ENCODE measurements at regions of chr9 and their contacts with region 1.

Region 1: GRCh38 chr9:128552153-128552743 is at the start of gene SPTAN1:
- DNase-seq: peak; percentile 99
- H3K4me3 Mint-ChIP-seq: no peak within 1 kb of the TSS
- H3K27ac Mint-ChIP-seq: peak within 1 kb of the TSS; percentile 98
- H3K4me1 Mint-ChIP-seq: peaks cover 36% of the 10 kb centered on the region
- H3K27me3 Mint-ChIP-seq: no peaks in the 10 kb centered on the region
- total RNA-seq, gene SPTAN1: 240 and 249 TPM in 2 replicates

Region 2: DNA sequence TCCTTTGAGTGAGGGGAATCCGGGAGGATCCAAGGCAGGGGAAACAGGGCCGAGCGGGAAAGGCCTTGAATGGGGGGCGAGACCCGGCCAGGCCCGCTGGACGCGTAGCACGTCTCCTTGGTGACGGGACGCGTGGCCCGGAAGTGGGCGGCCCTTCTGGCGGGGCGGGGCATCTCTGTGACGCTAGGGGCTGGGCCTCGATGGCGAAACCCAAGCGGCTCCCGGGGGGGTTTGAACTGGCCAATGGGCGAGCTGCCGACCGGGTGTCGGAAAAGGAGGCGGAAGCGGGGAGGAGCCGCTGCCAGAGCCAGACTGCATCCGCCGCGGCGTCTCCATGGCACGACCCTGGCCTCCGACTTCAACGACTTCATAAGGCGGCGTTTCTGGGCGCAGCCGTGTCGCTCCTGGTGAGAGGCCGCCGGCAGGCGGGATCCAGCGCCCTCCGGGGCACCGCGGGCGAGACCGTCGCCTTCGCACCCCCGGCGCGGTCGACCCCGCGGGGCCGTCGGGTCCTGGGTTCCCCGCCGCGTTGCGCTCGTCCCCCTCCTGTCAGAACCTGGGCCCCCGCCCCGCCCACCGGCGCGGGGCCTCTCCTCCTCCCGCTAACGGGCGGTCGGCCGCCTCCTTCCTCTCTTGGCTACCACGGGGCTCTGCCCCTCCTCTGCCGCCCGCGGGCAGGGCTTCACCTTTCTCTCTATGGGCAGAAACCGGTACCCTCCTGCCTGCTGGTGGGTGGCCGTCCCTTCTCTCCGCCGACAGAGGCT is 96.2 kb before region 1 on chr9 and contains the start of gene ODF2:
- intact Hi-C with region 1: loop called (anchors 1 kb)
- DNase-seq: peak; percentile 100
- H3K4me3 Mint-ChIP-seq: peak within 1 kb of the TSS; percentile 91
- H3K27ac Mint-ChIP-seq: peak within 1 kb of the TSS; percentile 94
- H3K4me1 Mint-ChIP-seq: peaks cover 20% of the 10 kb centered on the region
- H3K27me3 Mint-ChIP-seq: no peaks in the 10 kb centered on the region
- total RNA-seq, gene ODF2: 60.8 and 64.8 TPM in 2 replicates

Region 3: GRCh38 chr9:128504485-128505413 is 47.5 kb before region 1 on chr9 and contains the start of gene GLE1:
- intact Hi-C with region 1: loop called (anchors 2 kb)
- DNase-seq: peak; percentile 100
- H3K4me3 Mint-ChIP-seq: peak within 1 kb of the TSS; percentile 96
- H3K27ac Mint-ChIP-seq: peak within 1 kb of the TSS; percentile 95
- H3K4me1 Mint-ChIP-seq: peaks cover 25% of the 10 kb centered on the region
- H3K27me3 Mint-ChIP-seq: no peaks in the 10 kb centered on the region
- total RNA-seq, gene GLE1: 53.3 and 54.1 TPM in 2 replicates

Region 4: GRCh38 chr9:128688512-128689292 is 136.5 kb after region 1 on chr9 and contains the start of gene SET:
- intact Hi-C with region 1: loop called (anchors 1 kb)
- DNase-seq: peak; percentile 98
- H3K4me3 Mint-ChIP-seq: peak within 1 kb of the TSS; percentile 78
- H3K27ac Mint-ChIP-seq: peak within 1 kb of the TSS; percentile 93
- H3K4me1 Mint-ChIP-seq: peaks cover 57% of the 10 kb centered on the region
- H3K27me3 Mint-ChIP-seq: no peaks in the 10 kb centered on the region
- total RNA-seq, gene SET: 831 and 846 TPM in 2 replicates

Region 5: DNA sequence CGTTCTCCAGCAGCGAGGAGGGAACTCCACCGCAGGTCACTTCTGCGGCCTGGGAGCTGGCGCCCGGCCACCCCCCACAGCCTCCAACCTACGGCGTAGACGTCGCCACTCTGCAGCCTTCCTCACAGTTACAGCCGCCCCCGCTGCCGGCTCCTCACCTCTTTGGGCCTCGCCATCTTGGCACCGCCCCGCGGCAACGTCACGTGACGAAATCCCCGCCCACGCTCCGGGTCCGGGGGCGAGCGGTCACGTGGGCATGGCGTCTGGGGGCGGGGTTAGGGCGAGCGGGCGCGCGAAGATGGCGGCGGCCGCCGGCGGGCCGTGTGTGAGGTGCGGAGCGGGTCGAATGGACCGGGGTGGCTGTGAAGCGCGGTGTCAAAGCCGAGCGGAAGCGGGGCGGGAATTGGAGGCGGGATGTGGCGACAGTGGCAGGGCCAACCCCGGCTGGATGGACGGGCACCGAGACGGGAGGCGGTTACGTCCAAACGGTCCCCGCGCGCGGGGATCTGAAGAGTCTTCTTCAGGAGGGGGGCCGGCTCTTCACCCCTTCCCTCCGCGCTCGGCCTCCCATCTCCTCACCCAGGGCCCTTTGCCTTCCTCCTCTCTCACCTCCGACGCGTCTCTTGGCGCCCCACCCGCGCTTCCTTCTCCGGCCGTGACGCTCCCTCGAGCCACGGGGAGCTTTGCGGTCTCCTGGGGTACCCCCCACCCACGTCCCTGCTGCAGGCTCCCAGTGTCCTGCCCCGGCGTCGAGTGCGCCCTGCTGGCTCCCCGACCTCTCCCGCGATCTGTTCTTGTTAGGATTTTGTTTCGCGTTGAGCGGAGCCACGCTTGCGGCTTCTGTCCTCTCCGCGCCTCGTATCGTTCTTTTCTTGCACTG is 395.4 kb after region 1 on chr9 and contains the starts of genes DOLK and NUP188:
- intact Hi-C with region 1: loop called (anchors 2 kb)
- DNase-seq: peak; percentile 100
- H3K4me3 Mint-ChIP-seq: peak within 1 kb of the TSS; percentile 92
- H3K27ac Mint-ChIP-seq: peak within 1 kb of the TSS; percentile 99
- H3K4me1 Mint-ChIP-seq: peaks cover 33% of the 10 kb centered on the region
- H3K27me3 Mint-ChIP-seq: no peaks in the 10 kb centered on the region
- total RNA-seq, gene DOLK: 15.2 and 15.9 TPM in 2 replicates
- total RNA-seq, gene NUP188: 162 and 176 TPM in 2 replicates

Region 6: GRCh38 chr9:129626079-129626624 is 1073.9 kb after region 1 on chr9 and contains the start of gene NTMT1:
- intact Hi-C with region 1: loop called (anchors 5 kb)
- DNase-seq: peak; percentile 97
- H3K4me3 Mint-ChIP-seq: peak within 1 kb of the TSS; percentile 83
- H3K27ac Mint-ChIP-seq: peak within 1 kb of the TSS; percentile 93
- H3K4me1 Mint-ChIP-seq: peaks cover 33% of the 10 kb centered on the region
- H3K27me3 Mint-ChIP-seq: peaks cover 8% of the 10 kb centered on the region
- total RNA-seq, gene NTMT1: 72.0 and 72.4 TPM in 2 replicates

Measured in activated CD4-positive, alpha-beta T cell treated with anti-CD3 and anti-CD28 coated beads, Interleukin-2, amount 10 ng/mL, durations not matched to agents 24 days and 14 days (primary cell).